ENCODE measurements at regions of chr14 and their contacts with region 1.

Region 1: DNA sequence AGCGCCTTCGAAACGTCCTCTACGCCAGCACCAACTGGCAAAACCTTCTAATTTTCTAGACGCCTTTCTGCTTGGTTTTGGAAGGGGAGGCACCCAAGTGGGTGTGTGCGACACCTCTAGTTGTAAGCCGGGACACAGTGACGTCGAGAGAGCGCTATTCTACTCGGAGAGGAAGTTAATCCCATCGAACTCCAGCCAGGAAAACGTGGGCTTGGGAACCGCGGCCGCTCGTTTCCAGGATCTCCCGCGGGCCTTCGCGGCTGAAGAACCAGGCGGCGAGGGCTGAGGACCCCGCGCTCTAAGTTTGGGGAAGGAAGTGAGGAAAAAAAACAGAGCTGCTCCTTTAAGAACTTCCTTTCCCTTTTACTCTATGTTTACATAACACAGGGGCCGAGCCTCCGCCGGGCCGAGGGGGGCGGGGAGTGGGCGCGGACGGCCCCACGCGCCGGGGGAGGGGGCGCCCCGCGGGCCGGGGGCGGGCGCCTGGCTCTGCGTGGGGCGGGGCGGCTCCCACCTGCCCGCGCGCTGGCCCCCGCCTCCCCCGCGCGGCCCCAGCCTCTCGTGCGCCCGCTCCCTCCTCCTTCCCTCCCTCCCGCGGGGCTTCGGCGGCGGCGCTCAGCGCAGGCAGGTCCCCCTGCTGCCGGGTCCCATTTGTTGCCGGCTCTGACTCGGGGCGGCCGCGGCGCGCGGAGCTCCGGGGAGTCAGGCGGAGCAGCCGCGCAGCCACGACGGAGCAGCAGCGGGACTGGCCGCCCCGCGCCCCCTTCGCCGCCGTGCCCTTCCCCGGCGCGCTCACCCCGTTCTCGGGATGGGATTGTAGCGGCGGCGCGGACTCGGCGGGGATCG is at the start of gene PELI2:
- DNase-seq: peak; percentile 64
- H3K4me3 ChIP-seq: peak within 1 kb of the TSS; percentile 77 to 92 (median 90)
- H3K27ac ChIP-seq: peak within 1 kb of the TSS; percentile 48
- H3K4me1 ChIP-seq: peaks cover 19% of the 10 kb centered on the region
- H3K27me3 ChIP-seq: peaks cover 0 to 3% of the 10 kb centered on the region in 2 experiments
- CTCF ChIP-seq: peak in 1 of 2 donors; percentile 27
- POLR2A ChIP-seq: peak; percentile 46
- total RNA-seq, gene PELI2: 13.0 TPM in 2 replicates

Region 2: DNA sequence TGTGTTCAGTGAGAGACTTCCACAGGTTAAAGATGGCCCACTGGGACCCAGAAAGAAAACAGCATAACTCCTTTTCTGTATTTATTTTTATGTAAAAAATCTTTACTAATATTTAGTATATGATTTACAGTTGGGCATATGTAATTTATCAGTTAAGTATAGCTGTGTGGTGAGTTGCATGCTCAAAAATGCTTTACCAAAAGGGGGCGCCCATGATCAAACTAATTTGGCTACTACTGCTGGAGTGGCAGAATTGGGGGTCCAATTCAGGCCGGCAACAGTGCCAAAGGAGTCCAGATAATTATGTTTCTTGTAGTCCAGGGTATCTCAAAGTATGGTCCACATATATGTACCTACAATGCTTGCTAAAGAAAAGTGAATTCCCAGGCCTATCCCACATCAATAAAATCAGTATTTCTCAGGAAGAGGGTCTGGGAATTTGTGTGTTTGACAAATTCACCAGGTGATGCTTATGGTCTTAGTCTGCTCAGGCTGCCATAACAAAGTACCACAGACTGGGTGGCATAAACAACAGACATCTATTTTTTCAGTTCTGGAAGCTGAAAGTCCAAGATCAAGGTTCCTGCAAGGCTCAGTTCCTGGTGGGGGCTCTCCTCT is 386.0 kb before region 1 on chr14:
- CTCF ChIA-PET with region 1: interaction called, 22 read pairs
- POLR2A ChIA-PET with region 1: no interaction called
- dilution Hi-C with region 1: no loop called
- intact Hi-C with region 1: loop called (anchors 1 kb)
- DNase-seq: peak; percentile 46
- H3K4me3 ChIP-seq: no peak overlapping the region
- H3K27ac ChIP-seq: no peak overlapping the region
- H3K4me1 ChIP-seq: no peaks in the 10 kb centered on the region
- H3K27me3 ChIP-seq: no peaks in the 10 kb centered on the region
- CTCF ChIP-seq: peak; percentile 52 to 58
- POLR2A ChIP-seq: no peak

Region 3: GRCh38 chr14:55864890-55865655 is 252.9 kb before region 1 on chr14:
- CTCF ChIA-PET with region 1: no interaction called
- POLR2A ChIA-PET with region 1: no interaction called
- dilution Hi-C with region 1: no loop called
- intact Hi-C with region 1: loop called (anchors 10 kb)
- DNase-seq: no peak
- H3K4me3 ChIP-seq: no peak overlapping the region
- H3K27ac ChIP-seq: no peak overlapping the region
- H3K4me1 ChIP-seq: peaks cover 9% of the 10 kb centered on the region
- H3K27me3 ChIP-seq: no peaks in the 10 kb centered on the region
- CTCF ChIP-seq: peak in 1 of 2 donors; percentile 4
- POLR2A ChIP-seq: no peak

Region 4: DNA sequence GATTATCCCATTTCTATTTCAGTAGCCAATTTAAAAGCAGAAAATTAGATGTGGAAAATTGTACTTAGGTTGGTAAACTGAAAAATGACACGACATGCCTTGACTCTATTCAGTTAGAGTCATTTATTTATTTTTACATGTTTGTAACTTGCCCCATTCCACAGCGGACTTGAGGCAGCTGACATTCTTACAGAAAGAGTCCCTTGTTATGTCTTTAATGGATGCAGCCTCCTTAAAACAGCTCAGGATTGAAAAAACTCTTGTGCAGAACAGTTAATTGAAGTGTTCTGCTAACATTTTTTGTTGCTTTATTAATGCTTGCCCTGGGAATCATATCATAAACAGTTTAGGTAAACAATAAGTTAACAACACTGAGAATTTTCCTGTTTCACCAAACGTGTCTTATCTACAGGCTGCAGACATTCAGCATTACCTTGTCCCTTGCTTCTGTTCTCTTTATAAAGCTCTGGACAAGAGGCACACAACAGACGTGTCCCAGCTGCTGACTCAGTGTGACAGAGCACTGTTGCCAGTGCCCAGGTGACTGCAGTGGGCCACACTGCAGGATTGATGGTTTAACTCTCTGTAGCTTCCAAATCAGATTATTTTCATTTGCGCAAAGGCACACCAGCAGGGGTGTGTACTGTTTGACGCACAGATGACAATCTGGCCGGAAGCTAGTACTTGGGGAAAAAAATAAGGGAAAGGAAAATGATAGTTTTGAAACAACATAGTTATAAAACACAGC is 101.9 kb after region 1 on chr14:
- CTCF ChIA-PET with region 1: no interaction called
- POLR2A ChIA-PET with region 1: no interaction called
- dilution Hi-C with region 1: no loop called
- intact Hi-C with region 1: loop called (anchors 5 kb)
- DNase-seq: peak; percentile 30
- H3K4me3 ChIP-seq: no peak overlapping the region
- H3K27ac ChIP-seq: no peak overlapping the region
- H3K4me1 ChIP-seq: peaks cover 10% of the 10 kb centered on the region
- H3K27me3 ChIP-seq: no peaks in the 10 kb centered on the region
- CTCF ChIP-seq: no peak
- POLR2A ChIP-seq: no peak

Region 5: GRCh38 chr14:56271970-56272369 is 154.0 kb after region 1 on chr14:
- CTCF ChIA-PET with region 1: interaction called, 4 read pairs
- POLR2A ChIA-PET with region 1: no interaction called
- dilution Hi-C with region 1: no loop called
- intact Hi-C with region 1: loop called (anchors 1 kb)
- DNase-seq: peak; percentile 94
- H3K4me3 ChIP-seq: no peak overlapping the region
- H3K27ac ChIP-seq: peak overlapping the region; percentile 100
- H3K4me1 ChIP-seq: peaks cover 34% of the 10 kb centered on the region
- H3K27me3 ChIP-seq: no peaks in the 10 kb centered on the region
- CTCF ChIP-seq: no peak
- POLR2A ChIP-seq: no peak

Region 6: GRCh38 chr14:56422703-56423213 is 304.8 kb after region 1 on chr14:
- CTCF ChIA-PET with region 1: interaction called, 6 read pairs
- POLR2A ChIA-PET with region 1: no interaction called
- dilution Hi-C with region 1: no loop called
- intact Hi-C with region 1: loop called (anchors 1 kb)
- DNase-seq: peak; percentile 84
- H3K4me3 ChIP-seq: no peak overlapping the region
- H3K27ac ChIP-seq: no peak overlapping the region
- H3K4me1 ChIP-seq: no peaks in the 10 kb centered on the region
- H3K27me3 ChIP-seq: no peaks in the 10 kb centered on the region
- CTCF ChIP-seq: peak; percentile 59 to 71
- POLR2A ChIP-seq: no peak

Region 7: DNA sequence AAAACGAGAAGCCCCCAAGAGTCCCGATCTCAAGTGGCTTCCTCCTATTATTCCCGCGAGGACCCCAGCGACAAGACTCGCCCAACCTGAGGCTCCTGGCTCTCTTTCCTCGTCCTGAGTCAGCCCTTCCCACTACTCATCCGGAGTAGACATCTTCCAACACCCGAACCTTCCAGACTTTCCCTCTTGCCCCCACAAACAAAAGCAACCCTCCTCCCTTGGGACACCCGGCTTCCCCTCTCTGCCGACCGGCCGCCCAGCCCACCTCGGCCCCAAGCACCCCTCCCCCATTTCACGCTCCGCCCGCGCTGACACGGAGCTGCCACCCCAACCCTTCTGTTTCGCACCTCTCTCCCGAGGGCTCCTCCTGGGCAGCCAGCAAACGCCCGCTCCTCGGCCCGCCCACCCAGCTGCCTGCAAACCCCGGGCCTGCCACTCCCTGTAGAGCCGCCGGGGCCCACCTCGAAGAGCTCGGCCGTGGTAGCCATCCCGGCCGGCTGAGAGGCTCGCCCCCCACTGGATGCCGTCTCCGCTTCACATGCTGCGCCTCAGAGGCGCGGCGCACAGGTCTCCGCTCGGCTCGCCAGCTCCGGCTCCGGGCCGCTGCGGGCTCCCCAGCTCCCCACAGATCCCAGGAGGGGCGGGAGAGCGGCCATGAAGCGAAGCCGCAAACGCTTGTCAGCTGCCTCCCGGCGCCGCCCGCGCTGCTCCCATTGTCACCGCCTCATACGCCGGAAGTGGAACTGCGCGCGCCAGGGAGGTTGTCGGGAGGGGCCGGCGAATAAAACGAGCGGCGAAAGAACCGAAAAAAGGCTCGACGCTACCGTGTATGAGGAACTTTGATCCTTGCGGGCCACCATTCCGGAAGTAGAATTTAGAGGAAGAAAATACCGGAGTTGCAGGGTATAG is 1150.4 kb after region 1 on chr14 and contains the starts of genes AP5M1 and EXOC5:
- CTCF ChIA-PET with region 1: no interaction called
- POLR2A ChIA-PET with region 1: no interaction called
- dilution Hi-C with region 1: no loop called
- intact Hi-C with region 1: loop called (anchors 2 kb)
- DNase-seq: peak; percentile 90
- H3K4me3 ChIP-seq: peak within 1 kb of the TSS; percentile 79 to 98 (median 79)
- H3K27ac ChIP-seq: peak within 1 kb of the TSS; percentile 95
- H3K4me1 ChIP-seq: peaks cover 26% of the 10 kb centered on the region
- H3K27me3 ChIP-seq: no peaks in the 10 kb centered on the region
- CTCF ChIP-seq: no peak
- POLR2A ChIP-seq: peak; percentile 10
- total RNA-seq, gene AP5M1: 38.7 and 39.6 TPM in 2 replicates
- total RNA-seq, gene EXOC5: 95.0 and 104 TPM in 2 replicates